ENCODE measurements at regions of chr12 and their contacts with region 1.

Region 1: GRCh38 chr12:575948-576612 is 87.2 kb downstream of the NINJ2 start:
- DNase-seq: peak; percentile 91
- ATAC-seq: peak; percentile 96
- H3K4me3 ChIP-seq: peak overlapping the region; percentile 17
- H3K27ac ChIP-seq: peak overlapping the region; percentile 28
- H3K4me1 ChIP-seq: peaks cover 27% of the 10 kb centered on the region
- H3K27me3 ChIP-seq: no peaks in the 10 kb centered on the region
- CTCF ChIP-seq: peak; percentile 100

Region 2: GRCh38 chr12:642633-643474 is 66.8 kb after region 1 on chr12:
- intact Hi-C with region 1: loop called (anchors 10 kb)
- DNase-seq: peak; percentile 94
- ATAC-seq: peak; percentile 89
- H3K4me3 ChIP-seq: peak overlapping the region; percentile 80
- H3K27ac ChIP-seq: peak overlapping the region; percentile 99
- H3K4me1 ChIP-seq: peaks cover 63% of the 10 kb centered on the region
- H3K27me3 ChIP-seq: no peaks in the 10 kb centered on the region
- CTCF ChIP-seq: peak; percentile 43

Region 3: DNA sequence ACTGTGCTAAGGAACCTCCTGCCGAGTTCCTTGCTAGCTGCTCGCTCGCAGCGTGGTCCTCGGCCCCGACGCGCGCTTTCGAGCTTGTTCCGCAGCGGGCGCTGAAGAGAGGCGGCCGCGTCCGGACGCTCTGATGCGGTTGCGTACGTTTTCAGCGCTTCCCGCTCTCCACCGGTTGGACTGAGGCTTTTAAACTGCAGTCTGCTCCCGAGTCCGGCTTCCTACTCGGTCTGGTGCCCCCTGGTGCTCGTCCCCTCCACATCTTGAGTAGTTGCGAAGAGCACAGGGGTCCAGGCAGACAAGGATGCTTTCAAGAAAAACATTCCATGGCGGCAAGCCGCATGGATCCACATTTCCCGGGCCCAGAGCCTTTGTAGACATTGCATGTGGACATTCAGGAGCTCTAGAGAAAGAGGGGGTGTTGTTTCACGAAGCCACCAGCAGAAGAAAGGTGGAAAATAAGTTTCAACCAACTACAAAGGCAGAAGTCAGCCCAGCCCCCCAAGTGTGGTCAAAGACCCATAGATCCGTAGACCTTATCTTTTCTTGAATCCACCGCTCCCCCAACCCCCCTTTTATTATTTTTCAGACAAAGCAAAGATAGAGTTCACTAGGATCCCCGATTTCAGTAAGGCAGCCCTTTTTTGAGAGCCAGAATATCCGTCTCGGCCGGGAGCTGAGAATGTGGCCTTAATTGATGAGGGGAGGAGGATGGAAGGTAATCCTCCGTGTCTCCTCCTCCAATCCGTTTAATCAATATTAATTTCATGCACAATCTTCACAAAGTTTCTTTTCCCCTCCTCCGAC is 175.3 kb after region 1 on chr12:
- intact Hi-C with region 1: loop called (anchors 10 kb)
- DNase-seq: peak; percentile 94
- ATAC-seq: peak; percentile 76
- H3K4me3 ChIP-seq: peak overlapping the region; percentile 74
- H3K27ac ChIP-seq: peak overlapping the region; percentile 75
- H3K4me1 ChIP-seq: peaks cover 20% of the 10 kb centered on the region
- H3K27me3 ChIP-seq: no peaks in the 10 kb centered on the region
- CTCF ChIP-seq: peak; percentile 75

Measured in upper lobe of right lung (tissue), 1 donor.